ENCODE measurements at regions of chr1 and their contacts with region 1.

Region 1: GRCh38 chr1:201481761-201482493 is 12.9 kb upstream of the PHLDA3 start:
- DNase-seq: peak; percentile 45 to 93 (median 86)
- H3K4me3 ChIP-seq: peak overlapping the region in 49 of 59 donors; percentile 1 to 61 (median 41)
- H3K27ac ChIP-seq: peak overlapping the region; percentile 27 to 100 (median 89)
- H3K27me3 ChIP-seq: peaks cover 0 to 9% (median 0%) of the 10 kb centered on the region in 45 donors
- CTCF ChIP-seq: peak; percentile 59 to 99 (median 95)

Region 2: DNA sequence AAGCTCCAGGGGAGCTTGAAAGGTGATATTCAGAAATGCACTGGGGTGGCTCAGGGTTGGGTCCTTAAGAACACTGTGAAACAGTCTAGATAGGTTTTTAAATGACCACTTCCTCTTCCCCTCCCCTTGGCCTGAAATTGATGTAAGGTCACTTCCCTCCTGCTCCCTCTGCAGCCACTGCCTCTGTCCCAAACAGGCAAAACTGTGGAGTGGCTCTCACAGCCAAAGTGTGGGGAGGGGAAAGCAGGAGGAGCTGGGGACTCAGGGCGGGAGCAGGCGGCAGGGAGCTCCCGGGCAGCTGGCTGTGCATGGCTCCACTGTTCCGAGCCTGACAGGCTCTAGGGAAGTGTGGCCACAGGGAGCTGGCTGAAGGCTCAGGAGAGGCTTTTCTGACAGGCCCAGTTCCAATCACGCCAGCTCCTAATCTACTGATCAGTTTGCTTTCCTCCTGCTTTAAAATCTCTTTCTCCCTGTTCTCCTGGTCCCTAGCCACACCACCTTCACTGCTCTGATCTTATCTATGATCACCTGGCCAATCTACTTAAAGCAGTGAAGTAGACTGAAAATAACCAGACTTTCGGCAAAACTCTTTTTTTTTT is 30.1 kb after region 1 on chr1:
- intact Hi-C with region 1: loop called (anchors 1 kb)
- DNase-seq: peak in 9 of 10 donors; percentile 48 to 82 (median 72)
- H3K4me3 ChIP-seq: peak overlapping the region in 21 of 59 donors; percentile 1 to 35 (median 14)
- H3K27ac ChIP-seq: peak overlapping the region in 58 of 59 donors; percentile 52 to 100 (median 88)
- H3K27me3 ChIP-seq: no peaks in the 10 kb centered on the region
- CTCF ChIP-seq: peak in 16 of 56 donors; percentile 7 to 33 (median 20)

Region 3: GRCh38 chr1:201709564-201710295 is 227.8 kb after region 1 on chr1:
- intact Hi-C with region 1: loop called in 1 of 2 experiments (anchors 5 kb)
- DNase-seq: peak in 9 of 10 donors; percentile 44 to 87 (median 80)
- H3K4me3 ChIP-seq: no peak overlapping the region
- H3K27ac ChIP-seq: peak overlapping the region in 57 of 59 donors; percentile 15 to 100 (median 98)
- H3K27me3 ChIP-seq: no peaks in the 10 kb centered on the region
- CTCF ChIP-seq: peak; percentile 69 to 99 (median 96)

Measured in dorsolateral prefrontal cortex (tissue), 120 donors.